Activated CD4-positive, alpha-beta memory T cell treated with anti-CD3 and anti-CD28 coated beads for 36 hours (primary cell): ENCODE measurements at regions of chr5 and their contacts with region 1.

Region 1: DNA sequence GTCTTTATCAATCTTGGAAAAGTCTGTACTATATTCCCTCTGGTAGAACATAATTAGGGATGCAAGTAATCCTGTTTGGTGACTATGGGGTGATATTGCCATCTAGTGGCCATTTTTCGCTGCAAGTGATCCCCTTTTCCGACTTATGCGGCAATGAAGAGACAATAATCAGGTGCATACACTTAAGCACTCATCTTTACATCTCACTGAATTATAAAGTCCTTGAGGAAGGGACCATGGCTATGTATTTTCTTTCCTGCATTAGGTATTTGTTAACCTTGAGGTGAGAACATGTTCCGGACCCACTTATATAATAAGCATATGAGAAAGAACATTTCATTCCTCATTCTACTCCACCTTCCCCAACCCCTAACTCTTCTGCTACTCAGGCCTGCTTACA is 19.6 kb upstream of the LIX1 start:
- DNase-seq: peak; percentile 64
- H3K4me3 Mint-ChIP-seq: no peak overlapping the region
- H3K27ac Mint-ChIP-seq: no peak overlapping the region
- H3K4me1 Mint-ChIP-seq: peaks cover 17% of the 10 kb centered on the region
- H3K27me3 Mint-ChIP-seq: no peaks in the 10 kb centered on the region

Region 2: DNA sequence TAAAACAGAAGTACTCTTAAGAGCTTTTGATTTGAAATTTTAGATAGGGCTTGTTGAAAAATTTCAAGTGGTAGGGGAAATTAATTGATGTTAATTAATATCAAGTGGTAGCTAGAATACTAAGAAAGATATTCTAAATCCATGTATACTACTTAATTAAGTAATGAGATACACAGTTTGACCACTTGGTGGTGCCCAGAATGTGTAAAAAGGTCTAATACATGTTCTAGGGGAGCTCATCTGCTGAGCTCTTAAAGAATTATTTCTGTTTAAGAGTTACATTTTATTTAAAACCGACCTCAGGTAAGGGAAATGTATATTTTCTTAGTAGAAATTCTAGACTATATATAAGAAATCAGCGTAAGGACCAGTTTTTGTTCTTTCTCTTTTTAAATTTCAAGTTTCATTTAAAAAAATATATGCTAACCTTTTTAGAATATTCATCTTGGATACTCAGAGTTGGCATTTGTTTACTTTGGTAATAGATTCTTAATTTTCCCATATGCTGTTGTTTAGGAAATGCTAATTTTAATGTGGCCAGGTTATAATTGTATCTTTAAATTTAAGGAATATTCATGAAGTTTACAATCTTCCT is 164.7 kb before region 1 on chr5:
- CTCF ChIA-PET with region 1: interaction called, 33 read pairs
- POLR2A ChIA-PET with region 1: no interaction called
- intact Hi-C with region 1: loop called (anchors 1 kb)
- DNase-seq: no peak
- H3K4me3 Mint-ChIP-seq: no peak overlapping the region
- H3K27ac Mint-ChIP-seq: no peak overlapping the region
- H3K4me1 Mint-ChIP-seq: peaks cover 13% of the 10 kb centered on the region
- H3K27me3 Mint-ChIP-seq: no peaks in the 10 kb centered on the region

Region 3: DNA sequence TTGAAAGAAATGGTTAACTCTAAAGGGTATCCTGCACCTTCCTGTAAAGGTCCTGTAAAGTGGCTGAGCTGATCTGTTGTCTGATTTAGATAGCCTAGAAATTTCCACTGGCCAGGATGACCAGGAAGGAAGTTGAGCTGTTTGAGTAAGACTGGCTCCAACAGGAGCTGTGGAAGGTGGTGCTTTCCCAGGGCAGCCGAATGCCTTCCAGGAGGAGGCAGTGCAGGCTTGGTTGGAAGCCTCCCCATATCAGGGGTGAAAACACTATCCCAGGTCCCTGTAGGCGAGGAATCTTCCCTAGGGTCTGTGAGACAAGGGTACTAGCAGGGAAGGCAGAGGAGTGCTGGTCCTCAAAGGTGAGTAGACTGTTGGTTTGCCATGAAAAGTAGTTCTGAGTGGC is 118.0 kb before region 1 on chr5:
- CTCF ChIA-PET with region 1: interaction called, 29 read pairs
- POLR2A ChIA-PET with region 1: no interaction called
- intact Hi-C with region 1: loop called (anchors 2 kb)
- DNase-seq: no peak
- H3K4me3 Mint-ChIP-seq: no peak overlapping the region
- H3K27ac Mint-ChIP-seq: no peak overlapping the region
- H3K4me1 Mint-ChIP-seq: no peaks in the 10 kb centered on the region
- H3K27me3 Mint-ChIP-seq: no peaks in the 10 kb centered on the region

Region 4: DNA sequence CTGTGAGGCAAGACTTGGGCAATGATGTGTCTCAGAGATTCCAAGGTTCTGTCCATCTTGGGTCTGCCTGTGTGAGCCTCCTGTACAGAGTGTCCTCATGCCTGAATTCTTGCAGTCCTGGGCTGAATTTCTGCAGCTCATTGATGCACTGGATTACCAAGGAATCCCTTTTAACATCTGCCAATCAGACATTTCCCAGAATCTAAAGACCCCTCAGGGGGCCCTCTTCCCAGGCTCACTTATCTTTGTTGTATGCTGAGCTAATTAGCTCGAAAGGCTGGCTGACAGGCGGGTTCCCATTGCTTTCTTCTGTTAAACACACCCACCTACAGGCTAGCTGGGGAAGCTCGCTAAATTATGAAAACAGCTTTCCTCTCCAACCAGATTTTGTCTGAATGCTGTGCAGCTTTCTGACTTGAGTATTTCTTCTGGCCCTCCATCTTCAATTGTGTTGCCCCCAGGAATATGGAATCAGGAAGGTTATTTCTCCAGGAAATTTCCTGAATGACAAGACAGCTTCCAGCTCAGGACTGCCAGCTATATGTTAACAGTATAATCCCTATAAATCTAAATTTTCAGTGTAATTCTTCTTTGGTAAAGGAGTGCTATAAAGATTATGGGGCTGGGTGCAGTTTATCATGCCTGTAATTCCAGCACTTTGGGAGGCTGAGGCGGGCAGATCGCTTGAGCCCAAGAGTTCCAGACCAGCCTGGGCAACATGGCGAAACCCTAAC is 19.4 kb before region 1 on chr5 and contains the start of gene LIX1:
- CTCF ChIA-PET with region 1: interaction called, 17 read pairs
- POLR2A ChIA-PET with region 1: no interaction called
- intact Hi-C with region 1: no loop called
- DNase-seq: peak; percentile 43
- H3K4me3 Mint-ChIP-seq: no peak within 1 kb of the TSS
- H3K27ac Mint-ChIP-seq: no peak within 1 kb of the TSS
- H3K4me1 Mint-ChIP-seq: no peaks in the 10 kb centered on the region
- H3K27me3 Mint-ChIP-seq: peaks cover 4% of the 10 kb centered on the region
- total RNA-seq, gene LIX1: not detected

Region 5: GRCh38 chr5:99156688-99157087 is 1994.6 kb after region 1 on chr5:
- CTCF ChIA-PET with region 1: no interaction called
- POLR2A ChIA-PET with region 1: no interaction called
- intact Hi-C with region 1: no loop called
- DNase-seq: no peak
- H3K4me3 Mint-ChIP-seq: no peak overlapping the region
- H3K27ac Mint-ChIP-seq: no peak overlapping the region
- H3K4me1 Mint-ChIP-seq: no peaks in the 10 kb centered on the region
- H3K27me3 Mint-ChIP-seq: no peaks in the 10 kb centered on the region